B cell (primary cell): ENCODE measurements at regions of chr3 and their contacts with region 1.

Region 1: DNA sequence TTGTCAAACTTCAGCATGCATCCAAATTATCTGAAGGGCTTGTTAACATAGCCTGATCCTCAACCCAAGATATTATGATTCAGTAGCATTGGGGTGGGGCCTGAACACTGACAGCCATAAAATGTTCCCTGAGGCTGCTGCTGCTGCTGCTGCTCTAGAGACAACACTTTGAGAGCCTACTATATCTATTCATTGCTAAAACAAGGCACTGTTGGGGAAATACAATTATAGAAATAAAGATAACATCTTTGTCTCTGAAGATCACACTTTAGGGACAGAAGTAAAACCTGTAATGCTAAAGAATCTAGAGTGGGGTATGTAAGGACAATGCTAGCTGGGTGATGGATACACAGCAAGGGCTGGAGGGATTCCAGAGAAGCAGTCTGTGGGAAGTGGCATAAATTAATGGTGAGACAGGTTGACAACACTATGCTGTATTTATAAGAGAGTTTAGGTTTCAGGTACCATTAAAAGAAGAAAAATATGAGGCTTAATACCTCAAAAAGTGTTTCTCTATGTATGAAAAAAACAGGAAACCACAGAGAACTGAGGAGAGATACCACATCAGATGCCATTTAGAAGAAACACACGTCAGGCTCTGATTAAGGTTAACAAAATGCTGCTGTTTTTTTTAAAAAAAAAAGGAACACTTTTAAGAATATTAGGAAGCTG is 115.9 kb downstream of the CBLB start:
- DNase-seq: peak; percentile 43
- ATAC-seq: peak; percentile 70
- H3K4me3 ChIP-seq: peak overlapping the region in 1 of 5 experiments; percentile 12
- H3K4me3 Mint-ChIP-seq: peak overlapping the region; percentile 68
- H3K27ac ChIP-seq: peak overlapping the region; percentile 69 to 82
- H3K27ac Mint-ChIP-seq: peak overlapping the region; percentile 88
- H3K4me1 ChIP-seq: peaks cover 36 to 46% of the 10 kb centered on the region in 2 donors
- H3K4me1 Mint-ChIP-seq: peaks cover 50% of the 10 kb centered on the region
- H3K27me3 ChIP-seq: no peaks in the 10 kb centered on the region
- H3K27me3 Mint-ChIP-seq: no peaks in the 10 kb centered on the region
- CTCF ChIP-seq: no peak

Region 2: GRCh38 chr3:105722943-105723556 is 29.8 kb before region 1 on chr3:
- CTCF ChIA-PET with region 1: no interaction called
- POLR2A ChIA-PET with region 1: no interaction called
- intact Hi-C with region 1: loop called (anchors 2 kb)
- DNase-seq: peak; percentile 77
- ATAC-seq: peak; percentile 96
- H3K4me3 ChIP-seq: peak overlapping the region in 1 of 5 experiments; percentile 29
- H3K4me3 Mint-ChIP-seq: peak overlapping the region; percentile 26
- H3K27ac ChIP-seq: peak overlapping the region in 1 of 2 donors; percentile 35
- H3K27ac Mint-ChIP-seq: peak overlapping the region; percentile 51
- H3K4me1 ChIP-seq: peaks cover 4 to 15% of the 10 kb centered on the region in 2 donors
- H3K4me1 Mint-ChIP-seq: peaks cover 18% of the 10 kb centered on the region
- H3K27me3 ChIP-seq: no peaks in the 10 kb centered on the region
- H3K27me3 Mint-ChIP-seq: no peaks in the 10 kb centered on the region
- CTCF ChIP-seq: no peak

Region 3: DNA sequence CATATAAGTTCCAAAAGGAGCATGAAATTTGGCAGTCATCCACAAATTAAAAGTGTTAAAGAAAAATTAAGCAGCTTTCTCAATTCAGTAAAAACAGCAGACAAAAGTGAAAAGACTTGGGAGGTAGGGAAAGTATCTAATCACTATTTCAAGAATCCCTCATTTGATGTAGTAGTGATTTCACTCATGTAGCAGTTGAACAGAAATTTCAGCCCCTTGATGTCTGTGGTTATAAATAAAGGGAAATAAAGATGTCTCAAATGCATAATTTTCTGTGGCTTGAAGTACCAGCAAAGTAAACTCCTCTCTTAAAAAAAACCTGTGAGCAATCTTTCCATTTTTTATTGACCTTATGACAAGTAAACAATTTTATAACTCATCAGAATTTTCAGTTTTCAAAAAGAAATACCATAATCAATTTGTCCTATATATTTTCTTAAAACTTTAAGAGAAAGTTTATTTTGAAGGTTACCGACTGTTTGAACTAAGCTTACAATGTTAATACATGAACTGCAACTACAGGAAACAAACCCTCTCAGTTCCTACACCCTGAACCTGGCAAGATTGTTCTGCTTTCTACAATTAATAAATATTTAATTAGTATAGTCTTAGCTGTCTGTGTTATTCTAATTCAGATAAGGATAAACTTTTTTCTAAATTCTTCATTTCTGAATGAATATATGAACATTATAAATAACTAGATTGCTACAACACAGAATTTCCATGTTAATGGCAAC is 21.7 kb after region 1 on chr3:
- CTCF ChIA-PET with region 1: no interaction called
- POLR2A ChIA-PET with region 1: no interaction called
- intact Hi-C with region 1: loop called (anchors 2 kb)
- DNase-seq: no peak
- ATAC-seq: no peak
- H3K4me3 ChIP-seq: no peak overlapping the region
- H3K4me3 Mint-ChIP-seq: no peak overlapping the region
- H3K27ac ChIP-seq: peak overlapping the region in 1 of 2 donors; percentile 50
- H3K27ac Mint-ChIP-seq: no peak overlapping the region
- H3K4me1 ChIP-seq: peaks cover 8 to 18% of the 10 kb centered on the region in 2 donors
- H3K4me1 Mint-ChIP-seq: peaks cover 54% of the 10 kb centered on the region
- H3K27me3 ChIP-seq: no peaks in the 10 kb centered on the region
- H3K27me3 Mint-ChIP-seq: no peaks in the 10 kb centered on the region
- CTCF ChIP-seq: no peak

Region 4: GRCh38 chr3:105785803-105786202 is 32.9 kb after region 1 on chr3:
- CTCF ChIA-PET with region 1: no interaction called
- POLR2A ChIA-PET with region 1: no interaction called
- intact Hi-C with region 1: no loop called
- DNase-seq: no peak
- ATAC-seq: no peak
- H3K4me3 ChIP-seq: no peak overlapping the region
- H3K4me3 Mint-ChIP-seq: no peak overlapping the region
- H3K27ac ChIP-seq: no peak overlapping the region
- H3K27ac Mint-ChIP-seq: no peak overlapping the region
- H3K4me1 ChIP-seq: no peaks in the 10 kb centered on the region
- H3K4me1 Mint-ChIP-seq: peaks cover 32% of the 10 kb centered on the region
- H3K27me3 ChIP-seq: no peaks in the 10 kb centered on the region
- H3K27me3 Mint-ChIP-seq: no peaks in the 10 kb centered on the region
- CTCF ChIP-seq: no peak

Region 5: GRCh38 chr3:107064445-107065060 is 1311.7 kb after region 1 on chr3:
- CTCF ChIA-PET with region 1: no interaction called
- POLR2A ChIA-PET with region 1: no interaction called
- intact Hi-C with region 1: no loop called
- DNase-seq: peak; percentile 68
- ATAC-seq: peak; percentile 64
- H3K4me3 ChIP-seq: no peak overlapping the region
- H3K4me3 Mint-ChIP-seq: no peak overlapping the region
- H3K27ac ChIP-seq: no peak overlapping the region
- H3K27ac Mint-ChIP-seq: no peak overlapping the region
- H3K4me1 ChIP-seq: no peaks in the 10 kb centered on the region
- H3K4me1 Mint-ChIP-seq: peaks cover 4% of the 10 kb centered on the region
- H3K27me3 ChIP-seq: peaks cover 0 to 6% (median 0%) of the 10 kb centered on the region in 4 experiments
- H3K27me3 Mint-ChIP-seq: peaks cover 19% of the 10 kb centered on the region
- CTCF ChIP-seq: peak; percentile 93